ENCODE measurements at regions of chr17 and their contacts with region 1.

Region 1: DNA sequence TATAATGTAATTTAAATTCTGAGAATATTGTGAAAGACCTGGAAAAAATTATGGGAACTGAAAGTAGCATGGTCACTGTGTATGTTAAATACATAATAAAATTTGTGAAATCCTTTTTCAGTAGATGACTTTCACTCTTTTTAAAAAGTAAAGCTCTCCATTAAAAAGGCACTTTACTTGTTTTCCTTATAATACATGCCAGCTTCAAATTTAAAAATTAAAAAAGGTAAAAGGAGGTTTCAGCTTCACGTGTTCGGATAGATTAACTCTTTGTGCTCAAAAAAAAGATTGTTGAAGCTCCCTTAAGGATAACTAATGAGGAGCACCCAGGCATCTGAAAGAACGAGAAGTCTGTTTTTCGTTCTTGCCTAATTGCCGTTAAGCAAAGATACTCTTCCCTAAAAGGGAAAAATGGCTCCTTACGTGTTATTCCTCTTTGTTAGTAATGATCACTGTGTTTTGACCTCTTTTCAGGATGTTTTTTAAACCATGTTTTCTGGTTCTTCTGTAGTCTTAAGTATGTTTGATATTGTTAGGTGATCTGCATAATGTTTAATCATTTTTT is 87.8 kb downstream of the TUBD1 start:
- DNase-seq: no peak
- ATAC-seq: no peak
- H3K4me3 Mint-ChIP-seq: peak overlapping the region; percentile 71
- H3K27ac Mint-ChIP-seq: peak overlapping the region; percentile 76
- H3K4me1 Mint-ChIP-seq: peaks cover 11% of the 10 kb centered on the region
- H3K27me3 Mint-ChIP-seq: no peaks in the 10 kb centered on the region
- CTCF ChIP-seq: no peak

Region 2: GRCh38 chr17:59791603-59792457 is 13.2 kb before region 1 on chr17:
- CTCF ChIA-PET with region 1: interaction called, 3 read pairs
- POLR2A ChIA-PET with region 1: interaction called, 14 read pairs
- intact Hi-C with region 1: no loop called
- DNase-seq: no peak
- ATAC-seq: no peak
- H3K4me3 Mint-ChIP-seq: no peak overlapping the region
- H3K27ac Mint-ChIP-seq: no peak overlapping the region
- H3K4me1 Mint-ChIP-seq: peaks cover 21% of the 10 kb centered on the region
- H3K27me3 Mint-ChIP-seq: no peaks in the 10 kb centered on the region
- CTCF ChIP-seq: no peak

Region 3: GRCh38 chr17:59853168-59853918 is 48.4 kb after region 1 on chr17:
- CTCF ChIA-PET with region 1: no interaction called
- POLR2A ChIA-PET with region 1: no interaction called
- intact Hi-C with region 1: no loop called
- DNase-seq: no peak
- ATAC-seq: peak; percentile 78
- H3K4me3 Mint-ChIP-seq: no peak overlapping the region
- H3K27ac Mint-ChIP-seq: peak overlapping the region; percentile 78
- H3K4me1 Mint-ChIP-seq: peaks cover 25% of the 10 kb centered on the region
- H3K27me3 Mint-ChIP-seq: no peaks in the 10 kb centered on the region
- CTCF ChIP-seq: no peak